GM12878 (cell line): ENCODE measurements at regions of chr9 and their contacts with region 1.

Region 1: GRCh38 chr9:4559261-4560182 is 69.3 kb downstream of the SLC1A1 start:
- DNase-seq: peak; percentile 69
- ATAC-seq: peak; percentile 93
- H3K4me3 ChIP-seq: no peak overlapping the region
- H3K27ac ChIP-seq: peak overlapping the region; percentile 81
- H3K4me1 ChIP-seq: peaks cover 15% of the 10 kb centered on the region
- H3K27me3 ChIP-seq: no peaks in the 10 kb centered on the region
- CTCF ChIP-seq: no peak
- EP300 ChIP-seq: no peak
- POLR2A ChIP-seq: no peak
- RAD21 ChIP-seq: no peak

Region 2: DNA sequence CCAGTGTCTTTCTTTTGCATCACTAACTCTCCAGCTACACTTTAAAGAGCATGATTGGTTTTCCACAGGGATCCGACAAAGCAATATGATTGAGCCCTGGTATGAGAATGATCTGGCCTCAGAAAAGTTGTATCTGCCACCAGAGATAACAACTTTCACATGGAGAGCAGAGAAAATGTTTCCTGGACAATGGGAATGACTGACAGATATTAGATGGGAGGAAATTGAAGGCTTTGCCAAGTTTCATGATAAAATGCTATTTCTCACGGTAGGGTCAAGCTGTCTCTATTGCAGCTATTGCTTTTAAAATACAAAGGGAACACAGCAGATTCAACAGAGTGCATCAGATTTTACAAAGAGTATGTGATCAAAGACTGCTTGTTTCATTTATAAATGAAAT is 203.2 kb before region 1 on chr9:
- CTCF ChIA-PET with region 1: no interaction called
- POLR2A ChIA-PET with region 1: no interaction called
- RAD21 ChIA-PET with region 1: no interaction called
- SMC1A ChIA-PET with region 1: no interaction called
- in situ Hi-C with region 1: no loop called
- intact Hi-C with region 1: no loop called
- DNase-seq: no peak
- ATAC-seq: no peak
- H3K4me3 ChIP-seq: no peak overlapping the region
- H3K27ac ChIP-seq: no peak overlapping the region
- H3K4me1 ChIP-seq: no peaks in the 10 kb centered on the region
- H3K27me3 ChIP-seq: peaks cover 0 to 3% of the 10 kb centered on the region in 2 experiments; a peak in 1 of 4 replicates
- CTCF ChIP-seq: no peak
- EP300 ChIP-seq: no peak
- POLR2A ChIP-seq: no peak
- RAD21 ChIP-seq: no peak

Region 3: GRCh38 chr9:4574657-4575243 is 15.2 kb after region 1 on chr9:
- CTCF ChIA-PET with region 1: no interaction called
- POLR2A ChIA-PET with region 1: no interaction called
- RAD21 ChIA-PET with region 1: no interaction called
- SMC1A ChIA-PET with region 1: interaction called, 10 read pairs
- in situ Hi-C with region 1: no loop called
- intact Hi-C with region 1: no loop called
- DNase-seq: no peak
- ATAC-seq: peak; percentile 94
- H3K4me3 ChIP-seq: no peak overlapping the region
- H3K27ac ChIP-seq: peak overlapping the region; percentile 63
- H3K4me1 ChIP-seq: peaks cover 14% of the 10 kb centered on the region
- H3K27me3 ChIP-seq: no peaks in the 10 kb centered on the region
- CTCF ChIP-seq: no peak
- EP300 ChIP-seq: no peak
- POLR2A ChIP-seq: peak; percentile 51; the same call in 1 of the 2 replicates
- RAD21 ChIP-seq: no peak

Region 4: GRCh38 chr9:4679268-4680172 is 120.0 kb after region 1 on chr9 and contains the start of gene CDC37L1:
- CTCF ChIA-PET with region 1: no interaction called
- POLR2A ChIA-PET with region 1: no interaction called
- RAD21 ChIA-PET with region 1: no interaction called
- SMC1A ChIA-PET with region 1: no interaction called
- in situ Hi-C with region 1: no loop called
- intact Hi-C with region 1: no loop called
- DNase-seq: peak; percentile 83
- ATAC-seq: peak; percentile 94
- H3K4me3 ChIP-seq: peak within 1 kb of the TSS; percentile 89
- H3K27ac ChIP-seq: peak within 1 kb of the TSS; percentile 96
- H3K4me1 ChIP-seq: peaks cover 3% of the 10 kb centered on the region; the same call in 1 of the 2 replicates
- H3K27me3 ChIP-seq: no peaks in the 10 kb centered on the region
- CTCF ChIP-seq: peak; percentile 44 to 66 (median 60); a peak in 5 of 6 replicates
- EP300 ChIP-seq: no peak
- POLR2A ChIP-seq: peak; percentile 97
- RAD21 ChIP-seq: peak; percentile 21; the same call in 1 of the 2 replicates
- polyA plus RNA-seq, gene CDC37L1: 2.2 to 3.6 TPM

Region 5: GRCh38 chr9:5140151-5140550 is 580.6 kb after region 1 on chr9:
- CTCF ChIA-PET with region 1: no interaction called
- POLR2A ChIA-PET with region 1: interaction called, 10 read pairs
- RAD21 ChIA-PET with region 1: no interaction called
- SMC1A ChIA-PET with region 1: no interaction called
- in situ Hi-C with region 1: no loop called
- intact Hi-C with region 1: no loop called
- DNase-seq: no peak
- ATAC-seq: peak; percentile 74
- H3K4me3 ChIP-seq: no peak overlapping the region
- H3K27ac ChIP-seq: no peak overlapping the region
- H3K4me1 ChIP-seq: no peaks in the 10 kb centered on the region
- H3K27me3 ChIP-seq: no peaks in the 10 kb centered on the region
- CTCF ChIP-seq: no peak
- EP300 ChIP-seq: no peak
- POLR2A ChIP-seq: no peak
- RAD21 ChIP-seq: no peak